BJ (cell line): ENCODE measurements at regions of chr1 and their contacts with region 1.

Region 1: GRCh38 chr1:51679435-51679834 is 62.5 kb downstream of the OSBPL9 start:
- DNase-seq: no peak
- H3K4me3 ChIP-seq: no peak overlapping the region
- H3K27me3 ChIP-seq: no peaks in the 10 kb centered on the region
- CTCF ChIP-seq: no peak

Region 2: DNA sequence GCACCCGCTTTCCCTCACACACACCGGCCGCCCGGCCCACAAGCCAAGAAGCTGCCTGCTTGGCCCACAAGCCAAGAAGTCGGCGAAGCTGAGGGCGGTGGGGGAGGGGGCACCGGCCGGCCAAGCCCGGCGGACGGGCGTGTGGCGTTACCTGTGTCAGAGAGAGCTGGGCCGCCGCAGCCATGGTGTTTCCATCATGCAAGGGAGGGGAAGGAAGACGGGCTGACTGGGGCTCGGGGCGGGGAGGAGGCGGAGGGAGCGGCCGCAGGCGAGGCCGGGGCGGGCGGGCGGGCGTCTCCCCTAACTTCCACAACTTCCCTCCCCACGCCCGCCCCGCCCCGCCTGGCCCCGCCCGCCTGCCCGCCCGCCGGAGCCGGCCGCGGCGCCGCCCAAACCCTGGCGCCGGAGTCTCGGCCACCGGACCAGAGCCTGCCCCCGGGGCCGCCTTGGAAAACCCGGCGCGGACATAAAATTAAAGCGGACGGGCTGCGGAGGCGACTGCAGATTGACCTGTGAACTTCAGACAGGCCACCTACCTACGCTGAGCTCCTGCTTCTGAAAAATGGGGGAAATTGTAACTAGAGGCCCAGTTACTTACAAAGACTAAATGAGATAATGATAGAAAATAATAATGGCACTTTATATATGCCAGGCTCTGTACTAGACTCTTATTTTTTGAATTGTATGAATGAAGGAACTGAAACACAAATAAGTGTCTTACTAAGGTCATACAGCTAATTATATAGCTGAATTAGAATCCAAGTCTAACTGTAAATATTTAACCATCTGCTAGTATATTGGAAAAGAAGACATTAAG is 160.2 kb before region 1 on chr1 and contains the start of gene EPS15:
- CTCF ChIA-PET with region 1: no interaction called
- POLR2A ChIA-PET with region 1: no interaction called
- DNase-seq: no peak
- H3K4me3 ChIP-seq: peak within 1 kb of the TSS; percentile 93
- H3K27me3 ChIP-seq: no peaks in the 10 kb centered on the region
- CTCF ChIP-seq: no peak
- polyA plus RNA-seq, gene EPS15: 18.7 and 38.2 TPM in 2 replicates

Region 3: GRCh38 chr1:51569284-51570062 is 110.0 kb before region 1 on chr1:
- CTCF ChIA-PET with region 1: no interaction called
- POLR2A ChIA-PET with region 1: interaction called, 13 read pairs
- DNase-seq: peak; percentile 52
- H3K4me3 ChIP-seq: no peak overlapping the region
- H3K27me3 ChIP-seq: no peaks in the 10 kb centered on the region
- CTCF ChIP-seq: peak; percentile 25; the same call in 1 of the 2 replicates

Region 4: GRCh38 chr1:51661081-51661518 is 18.3 kb before region 1 on chr1:
- CTCF ChIA-PET with region 1: no interaction called
- POLR2A ChIA-PET with region 1: no interaction called
- DNase-seq: peak; percentile 98
- H3K4me3 ChIP-seq: 0 out of 2 replicates have a peak overlapping the region, but pooled peaks have one; percentile 9
- H3K27me3 ChIP-seq: no peaks in the 10 kb centered on the region
- CTCF ChIP-seq: no peak

Region 5: DNA sequence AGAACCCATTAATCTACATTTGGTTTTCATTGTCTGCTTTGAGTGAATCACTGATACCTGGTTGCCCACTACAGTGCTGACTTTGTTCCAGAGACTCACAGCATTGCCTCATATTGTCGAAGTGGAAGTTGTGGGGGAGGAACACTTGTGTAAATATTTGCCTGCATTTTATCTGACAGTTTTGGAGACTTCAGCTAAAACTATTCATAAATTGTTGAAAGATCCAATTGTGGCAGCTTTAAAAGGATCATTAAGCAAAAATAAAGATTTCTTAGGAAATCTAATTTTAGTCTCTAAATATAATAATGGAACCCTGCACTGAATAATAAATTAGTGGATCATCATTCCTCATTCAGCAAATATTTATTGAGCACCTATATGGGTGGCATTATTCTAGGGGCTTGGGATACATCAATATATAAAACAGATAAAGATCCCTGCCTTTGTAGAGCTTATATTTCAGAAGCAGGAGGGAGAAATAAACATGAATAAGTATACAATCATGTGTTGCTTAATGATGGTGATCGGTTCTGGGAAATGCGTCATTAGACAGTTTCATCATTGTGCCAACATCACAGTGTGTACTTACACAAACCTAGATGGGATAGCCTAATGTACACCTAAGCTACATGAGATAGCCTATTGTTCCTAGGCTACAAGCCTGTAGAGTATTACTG is 11.0 kb after region 1 on chr1:
- CTCF ChIA-PET with region 1: no interaction called
- POLR2A ChIA-PET with region 1: no interaction called
- DNase-seq: peak; percentile 36
- H3K4me3 ChIP-seq: no peak overlapping the region
- H3K27me3 ChIP-seq: no peaks in the 10 kb centered on the region
- CTCF ChIP-seq: no peak